Colonic mucosa (tissue), 4 donors: ENCODE measurements at regions of chr1 and their contacts with region 1.

Region 1: DNA sequence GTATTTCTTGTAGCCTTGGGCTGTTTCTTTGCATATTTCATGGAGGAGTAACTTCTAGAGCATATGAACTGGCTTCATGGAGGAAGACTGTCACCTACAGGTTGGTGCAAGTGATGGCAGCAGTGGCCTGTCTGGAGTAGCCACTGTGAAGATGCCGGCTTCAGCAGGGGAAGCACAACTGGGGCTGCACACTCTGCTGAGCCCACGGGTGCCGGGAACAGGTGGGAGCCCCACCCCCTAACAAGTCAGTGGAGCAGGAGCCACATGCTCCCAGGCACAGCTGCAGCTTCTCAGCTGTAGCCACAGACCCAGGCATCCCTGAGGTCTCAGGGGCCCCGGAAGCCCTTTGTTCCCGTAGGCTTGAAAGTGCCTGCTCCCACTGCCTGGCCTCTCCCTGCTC is 43.2 kb upstream of the C1orf185 start:
- DNase-seq: no peak
- H3K4me3 ChIP-seq: no peak overlapping the region
- H3K27ac ChIP-seq: no peak overlapping the region
- H3K4me1 ChIP-seq: no peaks in the 10 kb centered on the region
- H3K27me3 ChIP-seq: no peaks in the 10 kb centered on the region
- CTCF ChIP-seq: peak; percentile 45

Region 2: DNA sequence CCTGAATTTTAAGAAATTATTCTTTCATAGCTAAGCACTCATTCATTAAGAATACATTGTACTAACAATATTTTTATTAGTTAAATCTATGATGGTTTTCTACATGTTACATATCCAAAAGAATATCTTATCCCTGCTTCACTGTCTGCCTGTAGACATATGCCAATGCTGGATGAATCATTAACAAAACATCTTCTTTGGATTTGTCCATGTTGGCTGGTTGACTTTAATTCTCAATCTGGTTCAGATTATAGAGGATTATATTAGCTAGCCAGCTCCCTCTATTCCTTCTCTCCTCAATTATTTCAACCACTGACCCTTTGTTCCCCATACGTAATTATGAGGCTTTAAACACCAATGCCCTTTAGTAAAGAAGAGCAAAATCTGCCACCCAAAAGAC is 496.8 kb before region 1 on chr1:
- intact Hi-C with region 1: no loop called
- DNase-seq: no peak
- H3K4me3 ChIP-seq: no peak overlapping the region
- H3K27ac ChIP-seq: no peak overlapping the region
- H3K4me1 ChIP-seq: no peaks in the 10 kb centered on the region
- H3K27me3 ChIP-seq: no peaks in the 10 kb centered on the region
- CTCF ChIP-seq: no peak

Region 3: GRCh38 chr1:50929376-50929958 is 129.4 kb before region 1 on chr1:
- intact Hi-C with region 1: loop called (anchors 10 kb)
- DNase-seq: no peak
- H3K4me3 ChIP-seq: no peak overlapping the region
- H3K27ac ChIP-seq: no peak overlapping the region
- H3K4me1 ChIP-seq: no peaks in the 10 kb centered on the region
- H3K27me3 ChIP-seq: no peaks in the 10 kb centered on the region
- CTCF ChIP-seq: peak; percentile 53

Region 4: DNA sequence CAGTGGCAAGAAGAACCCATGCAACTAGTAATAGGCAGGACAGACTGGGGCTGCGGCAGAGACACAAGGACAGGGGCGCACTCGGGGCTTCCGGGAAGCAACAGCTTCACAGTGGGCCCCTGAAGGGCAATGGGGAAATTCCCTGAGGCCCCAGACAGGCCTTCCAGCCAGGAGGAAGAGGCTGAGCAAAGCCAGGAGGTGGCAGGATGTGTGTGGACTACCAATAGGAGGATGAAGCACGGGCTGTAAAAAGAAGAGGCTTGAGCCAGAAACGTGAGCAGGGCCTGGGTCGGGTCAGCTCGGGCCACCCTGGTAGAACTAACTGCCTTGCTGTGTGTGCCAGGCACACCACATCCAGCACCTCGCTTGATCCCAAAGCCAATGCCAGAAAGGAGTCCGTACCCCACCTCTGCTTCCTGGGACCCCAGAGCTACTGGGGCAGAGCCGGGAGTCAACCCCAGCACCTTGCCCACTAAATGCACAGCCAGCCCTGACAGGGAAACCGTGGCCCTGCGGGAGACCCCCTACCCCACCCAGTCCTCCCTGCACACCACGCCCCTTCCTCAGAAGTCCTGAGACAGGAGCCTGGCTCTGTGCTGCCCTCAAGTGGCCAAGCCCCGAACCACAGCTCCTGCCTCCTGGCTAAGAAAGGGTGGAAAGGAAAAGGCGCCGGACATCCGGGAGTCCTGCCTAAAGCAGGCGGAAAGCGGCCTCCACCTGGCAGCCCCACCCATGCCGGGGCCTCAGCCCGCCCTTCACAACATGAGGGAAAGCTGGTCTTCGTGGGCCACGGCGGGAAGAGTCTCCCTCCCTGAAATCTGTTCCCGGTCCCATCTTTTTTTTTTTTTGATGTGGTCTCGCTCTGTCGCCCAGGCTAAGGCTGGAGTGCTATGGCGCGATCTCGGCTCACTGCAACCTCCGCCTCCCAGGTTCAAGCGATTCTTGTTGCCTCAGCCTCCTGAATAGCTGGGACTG is 237.8 kb after region 1 on chr1:
- intact Hi-C with region 1: no loop called
- DNase-seq: peak; percentile 92
- H3K4me3 ChIP-seq: peak overlapping the region; percentile 5
- H3K27ac ChIP-seq: no peak overlapping the region
- H3K4me1 ChIP-seq: no peaks in the 10 kb centered on the region
- H3K27me3 ChIP-seq: no peaks in the 10 kb centered on the region
- CTCF ChIP-seq: peak; percentile 95